Caco-2 (cell line): ENCODE measurements at regions of chrX and their contacts with region 1.

Region 1: DNA sequence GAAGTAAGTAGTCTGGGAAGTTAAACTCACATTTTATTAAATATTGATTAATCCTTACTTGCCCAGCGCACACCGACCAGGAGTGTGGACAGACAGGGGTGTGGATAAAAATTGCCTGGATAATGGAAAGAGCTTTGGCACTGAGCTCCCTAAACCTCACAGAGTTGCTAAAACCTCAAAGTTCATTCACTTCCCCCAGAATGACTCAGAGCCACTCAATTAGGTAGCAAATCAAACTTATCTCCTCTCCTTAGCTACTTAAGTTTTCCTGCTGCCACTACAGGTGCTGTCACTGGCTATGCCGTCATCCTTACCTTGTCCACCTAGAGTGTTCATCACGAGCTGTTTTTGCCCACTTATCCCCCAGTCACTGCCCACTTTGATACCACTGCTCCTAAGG is 27.0 kb upstream of the MID1IP1 start:
- DNase-seq: no peak
- H3K4me3 ChIP-seq: no peak overlapping the region
- H3K4me3 Mint-ChIP-seq: no peak overlapping the region
- H3K27ac Mint-ChIP-seq: no peak overlapping the region
- H3K4me1 ChIP-seq: no peaks in the 10 kb centered on the region
- H3K4me1 Mint-ChIP-seq: no peaks in the 10 kb centered on the region
- H3K27me3 ChIP-seq: no peaks in the 10 kb centered on the region
- H3K27me3 Mint-ChIP-seq: peaks cover 8% of the 10 kb centered on the region
- CTCF ChIP-seq: no peak

Region 2: GRCh38 chrX:38939067-38939466 is 164.8 kb after region 1 on chrX:
- CTCF ChIA-PET with region 1: no interaction called
- POLR2A ChIA-PET with region 1: no interaction called
- intact Hi-C with region 1: no loop called
- DNase-seq: no peak
- H3K4me3 ChIP-seq: no peak overlapping the region
- H3K4me3 Mint-ChIP-seq: no peak overlapping the region
- H3K27ac Mint-ChIP-seq: no peak overlapping the region
- H3K4me1 ChIP-seq: no peaks in the 10 kb centered on the region
- H3K4me1 Mint-ChIP-seq: no peaks in the 10 kb centered on the region
- H3K27me3 ChIP-seq: no peaks in the 10 kb centered on the region
- H3K27me3 Mint-ChIP-seq: no peaks in the 10 kb centered on the region
- CTCF ChIP-seq: no peak

Region 3: DNA sequence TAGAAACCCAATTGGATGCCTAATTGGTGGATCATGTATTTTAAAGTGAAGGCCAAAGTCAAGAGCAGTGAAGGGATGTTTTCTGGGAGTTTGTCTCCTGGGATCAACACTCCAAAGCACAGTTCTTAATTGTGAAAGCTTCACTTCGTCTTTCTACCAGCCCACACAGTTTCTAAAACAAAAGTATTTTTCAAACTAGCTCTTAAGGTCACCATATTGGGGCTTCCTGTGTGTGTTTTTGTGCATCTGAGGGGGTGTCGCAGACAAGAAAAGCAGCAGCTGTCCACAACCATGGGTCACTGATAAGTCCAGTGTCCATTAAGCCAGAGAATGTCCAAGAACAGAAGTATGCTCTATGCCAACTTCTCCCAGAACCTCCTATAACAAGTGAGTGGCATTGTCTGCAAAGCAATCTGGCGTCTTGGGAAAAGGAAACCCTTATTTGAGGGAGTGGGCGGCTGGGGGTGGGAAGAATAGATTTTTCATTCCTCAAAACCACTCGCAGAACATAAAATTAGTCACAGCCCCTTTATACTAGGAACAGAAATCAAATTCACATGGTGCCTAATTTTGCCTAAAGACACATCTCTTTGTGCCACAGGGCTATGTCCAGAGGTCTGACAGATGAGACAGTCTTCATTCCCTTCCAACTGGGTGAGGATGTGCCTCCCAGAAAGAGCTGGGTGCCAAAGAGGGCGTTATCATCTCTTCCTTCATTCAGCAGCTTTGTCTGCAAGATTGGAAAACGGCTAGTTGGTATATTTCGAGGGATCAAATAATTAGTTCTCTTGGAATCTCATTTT is 713.1 kb after region 1 on chrX:
- CTCF ChIA-PET with region 1: no interaction called
- POLR2A ChIA-PET with region 1: no interaction called
- intact Hi-C with region 1: loop called (anchors 5 kb)
- DNase-seq: no peak
- H3K4me3 ChIP-seq: no peak overlapping the region
- H3K4me3 Mint-ChIP-seq: no peak overlapping the region
- H3K27ac Mint-ChIP-seq: no peak overlapping the region
- H3K4me1 ChIP-seq: no peaks in the 10 kb centered on the region
- H3K4me1 Mint-ChIP-seq: no peaks in the 10 kb centered on the region
- H3K27me3 ChIP-seq: no peaks in the 10 kb centered on the region
- H3K27me3 Mint-ChIP-seq: peaks cover 3% of the 10 kb centered on the region
- CTCF ChIP-seq: no peak